ENCODE measurements at regions of chr5 and their contacts with region 1.

Region 1: GRCh38 chr5:82165740-82166530 is 112.2 kb downstream of the RPS23 start:
- DNase-seq: peak; percentile 86
- H3K4me3 ChIP-seq: no peak overlapping the region
- H3K27ac ChIP-seq: peak overlapping the region; percentile 17
- H3K4me1 ChIP-seq: peaks cover 26% of the 10 kb centered on the region
- H3K27me3 ChIP-seq: no peaks in the 10 kb centered on the region
- CTCF ChIP-seq: peak; percentile 60 to 64
- POLR2A ChIP-seq: no peak

Region 2: GRCh38 chr5:81420039-81420667 is 745.8 kb before region 1 on chr5:
- CTCF ChIA-PET with region 1: interaction called, 83 read pairs
- POLR2A ChIA-PET with region 1: no interaction called
- dilution Hi-C with region 1: no loop called
- intact Hi-C with region 1: loop called (anchors 1 kb)
- DNase-seq: peak; percentile 85
- H3K4me3 ChIP-seq: no peak overlapping the region
- H3K27ac ChIP-seq: peak overlapping the region; percentile 85
- H3K4me1 ChIP-seq: peaks cover 14% of the 10 kb centered on the region
- H3K27me3 ChIP-seq: no peaks in the 10 kb centered on the region
- CTCF ChIP-seq: no peak
- POLR2A ChIP-seq: no peak

Region 3: GRCh38 chr5:81601919-81602318 is 564.0 kb before region 1 on chr5:
- CTCF ChIA-PET with region 1: no interaction called
- POLR2A ChIA-PET with region 1: no interaction called
- dilution Hi-C with region 1: no loop called
- intact Hi-C with region 1: loop called (anchors 10 kb)
- DNase-seq: peak; percentile 84
- H3K4me3 ChIP-seq: no peak overlapping the region
- H3K27ac ChIP-seq: peak overlapping the region; percentile 57
- H3K4me1 ChIP-seq: peaks cover 16% of the 10 kb centered on the region
- H3K27me3 ChIP-seq: no peaks in the 10 kb centered on the region
- CTCF ChIP-seq: no peak
- POLR2A ChIP-seq: no peak

Region 4: DNA sequence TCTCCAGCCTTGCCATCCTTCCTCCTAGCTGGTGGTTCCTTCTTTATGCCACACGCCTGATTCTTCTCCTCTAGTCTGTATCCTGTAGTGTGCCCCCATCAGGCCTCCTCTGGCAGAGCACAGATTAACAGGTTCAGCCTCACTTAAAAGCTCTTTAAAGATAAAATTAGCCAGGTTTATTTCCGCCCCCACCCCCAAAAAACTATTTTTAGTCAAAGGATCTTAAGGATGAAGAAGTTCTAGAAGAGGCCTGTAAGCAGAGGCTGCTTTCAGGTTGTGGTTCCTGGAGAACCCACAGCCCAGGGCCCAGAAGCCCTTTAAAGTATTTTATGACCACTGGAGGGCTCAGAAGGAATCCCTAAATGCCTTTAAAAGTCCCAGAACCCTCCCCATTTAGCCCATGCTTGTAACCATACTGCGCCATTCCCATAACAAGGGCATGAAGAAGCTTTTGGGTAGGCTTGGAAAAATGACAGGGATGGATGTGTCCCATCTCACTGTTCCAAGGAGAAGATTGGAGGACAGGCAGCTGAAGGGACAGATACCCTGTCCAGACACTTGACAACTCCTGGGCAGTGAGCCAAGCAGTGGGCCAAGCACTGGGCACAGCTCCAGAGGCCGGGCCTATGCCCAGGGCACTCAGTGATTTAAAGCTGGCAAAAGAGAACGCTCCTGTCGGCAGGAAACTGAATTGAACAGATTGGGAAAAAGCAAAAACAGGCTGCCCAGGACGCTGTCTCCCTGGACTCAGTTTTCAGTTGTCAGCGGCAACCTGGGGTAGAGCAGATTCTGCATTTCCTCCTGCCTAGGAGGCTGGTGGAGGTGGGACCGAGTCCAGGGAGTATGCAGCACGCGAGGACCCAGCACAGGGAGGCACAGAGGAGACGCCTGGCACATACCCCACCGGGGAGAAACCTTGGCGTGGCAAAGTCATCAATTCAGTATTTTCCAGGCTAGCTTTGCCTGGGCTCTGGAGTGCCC is 308.7 kb before region 1 on chr5:
- CTCF ChIA-PET with region 1: interaction called, 48 read pairs
- POLR2A ChIA-PET with region 1: no interaction called
- dilution Hi-C with region 1: no loop called
- intact Hi-C with region 1: no loop called
- DNase-seq: peak; percentile 62
- H3K4me3 ChIP-seq: no peak overlapping the region
- H3K27ac ChIP-seq: no peak overlapping the region
- H3K4me1 ChIP-seq: peaks cover 5% of the 10 kb centered on the region
- H3K27me3 ChIP-seq: no peaks in the 10 kb centered on the region
- CTCF ChIP-seq: peak in 1 of 2 donors; percentile 43
- POLR2A ChIP-seq: no peak

Region 5: GRCh38 chr5:82107267-82107666 is 58.7 kb before region 1 on chr5:
- CTCF ChIA-PET with region 1: interaction called, 97 read pairs
- POLR2A ChIA-PET with region 1: no interaction called
- dilution Hi-C with region 1: no loop called
- intact Hi-C with region 1: loop called (anchors 1 kb)
- DNase-seq: peak; percentile 32
- H3K4me3 ChIP-seq: no peak overlapping the region
- H3K27ac ChIP-seq: no peak overlapping the region
- H3K4me1 ChIP-seq: no peaks in the 10 kb centered on the region
- H3K27me3 ChIP-seq: no peaks in the 10 kb centered on the region
- CTCF ChIP-seq: peak; percentile 9 to 31
- POLR2A ChIP-seq: no peak